Activated naive CD4-positive, alpha-beta T cell treated with anti-CD3 and anti-CD28 coated beads for 36 hours (primary cell): ENCODE measurements at regions of chr1 and their contacts with region 1.

Region 1: DNA sequence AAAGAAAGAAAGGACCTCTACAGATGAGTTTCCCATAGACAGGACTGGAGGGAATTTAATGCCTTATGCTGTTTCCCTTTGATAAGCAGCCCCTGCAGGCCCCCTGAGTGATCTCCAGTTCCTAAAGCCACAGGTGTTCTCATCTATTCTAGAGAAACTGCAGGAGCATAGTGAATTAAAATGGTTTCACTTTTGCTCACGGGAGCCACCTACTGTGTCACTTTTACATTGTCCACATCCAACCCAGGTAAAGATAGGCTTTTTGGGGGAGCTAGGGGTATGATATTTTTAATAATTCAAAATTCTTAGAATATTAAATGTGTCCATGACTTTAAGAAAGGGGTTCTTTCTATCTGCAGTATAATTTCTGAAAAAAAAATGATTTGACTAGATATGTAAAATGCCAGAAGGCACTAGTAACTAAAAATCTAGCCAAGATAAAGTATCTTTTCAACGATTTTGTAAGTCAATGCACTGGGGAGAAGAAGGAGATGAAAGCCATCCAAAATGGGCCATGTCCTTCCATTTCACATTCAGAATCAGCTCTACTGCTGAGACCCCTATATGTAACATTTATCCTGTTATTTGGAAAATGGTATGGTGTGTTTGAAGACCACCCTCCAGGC is 267.3 kb upstream of the DUSP10 start:
- DNase-seq: peak; percentile 47
- H3K4me3 Mint-ChIP-seq: no peak overlapping the region
- H3K27ac Mint-ChIP-seq: no peak overlapping the region
- H3K4me1 Mint-ChIP-seq: no peaks in the 10 kb centered on the region
- H3K27me3 Mint-ChIP-seq: no peaks in the 10 kb centered on the region

Region 2: DNA sequence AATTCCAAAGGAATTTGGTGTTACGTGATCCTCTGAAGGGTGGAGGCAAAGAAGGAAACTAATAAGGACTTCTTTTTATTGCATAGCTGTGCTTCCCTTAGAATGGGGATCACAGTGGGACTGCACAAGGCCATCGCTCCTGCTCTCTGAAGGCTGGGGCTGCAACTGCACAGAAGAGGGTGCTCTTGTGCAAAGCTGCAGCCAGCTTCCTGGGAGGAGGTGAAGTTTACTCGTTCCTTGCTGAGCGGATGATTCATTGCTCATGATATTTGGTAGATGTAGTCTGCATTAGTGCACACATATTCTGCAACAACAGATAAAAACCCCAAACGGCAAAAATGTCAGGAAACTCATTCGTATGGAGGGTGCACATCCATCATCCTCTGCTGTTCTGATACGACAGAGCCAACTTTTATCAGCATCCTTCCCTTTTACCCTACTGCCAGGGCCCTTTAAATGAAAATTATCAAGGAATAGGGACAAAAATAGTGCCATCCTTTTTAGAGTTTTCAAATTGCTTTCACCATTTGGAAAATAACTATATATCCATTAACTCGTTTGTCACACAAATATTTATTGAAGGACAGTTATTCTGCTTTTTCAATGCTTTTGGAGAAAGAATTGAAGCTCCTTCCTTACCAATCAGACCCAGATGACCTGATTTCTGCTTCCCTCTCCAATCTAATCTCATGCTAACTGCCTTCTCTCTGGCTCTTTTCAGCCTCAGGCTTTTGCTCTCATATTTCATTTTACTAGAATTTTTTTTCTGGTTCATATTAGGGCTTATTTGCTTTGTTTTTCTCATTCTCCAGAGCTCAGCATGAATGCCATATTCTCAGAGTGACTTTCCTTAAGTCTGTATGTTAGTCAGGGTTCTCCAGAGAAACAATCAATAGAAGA is 530.9 kb before region 1 on chr1:
- CTCF ChIA-PET with region 1: interaction called, 3 read pairs
- intact Hi-C with region 1: loop called (anchors 2 kb)
- DNase-seq: peak; percentile 74
- H3K4me3 Mint-ChIP-seq: no peak overlapping the region
- H3K27ac Mint-ChIP-seq: no peak overlapping the region
- H3K4me1 Mint-ChIP-seq: peaks cover 2% of the 10 kb centered on the region
- H3K27me3 Mint-ChIP-seq: peaks cover 5% of the 10 kb centered on the region

Region 3: DNA sequence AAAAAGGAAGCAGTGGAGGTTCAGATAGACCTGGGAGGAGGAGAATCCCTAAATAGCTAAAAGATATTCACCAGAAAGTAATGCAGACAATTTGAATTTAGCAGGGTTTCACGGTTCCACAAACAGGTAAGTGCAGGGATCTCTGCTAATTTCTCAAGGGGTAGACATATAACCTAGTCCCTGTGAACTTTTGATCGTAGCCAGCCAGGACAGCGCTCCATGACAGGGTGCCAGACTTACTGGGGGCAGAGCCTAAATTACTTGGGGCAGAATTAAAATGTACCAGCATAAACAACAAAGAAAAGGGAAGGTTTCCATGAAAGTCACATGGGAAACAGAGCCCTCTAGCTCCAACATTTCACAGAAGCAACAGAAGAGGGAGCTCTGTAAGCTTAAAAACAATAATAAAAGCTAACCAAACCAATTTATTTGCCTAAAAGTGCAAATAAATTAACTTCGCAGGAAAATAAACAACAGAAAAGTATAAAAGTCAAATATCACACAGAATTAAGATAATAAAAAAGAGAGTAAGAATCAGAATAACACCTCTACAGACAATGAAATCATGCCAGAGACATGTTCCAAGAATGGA is 465.6 kb before region 1 on chr1:
- CTCF ChIA-PET with region 1: interaction called, 3 read pairs
- intact Hi-C with region 1: loop called (anchors 1 kb)
- DNase-seq: no peak
- H3K4me3 Mint-ChIP-seq: no peak overlapping the region
- H3K27ac Mint-ChIP-seq: no peak overlapping the region
- H3K4me1 Mint-ChIP-seq: no peaks in the 10 kb centered on the region
- H3K27me3 Mint-ChIP-seq: peaks cover 8% of the 10 kb centered on the region

Region 4: DNA sequence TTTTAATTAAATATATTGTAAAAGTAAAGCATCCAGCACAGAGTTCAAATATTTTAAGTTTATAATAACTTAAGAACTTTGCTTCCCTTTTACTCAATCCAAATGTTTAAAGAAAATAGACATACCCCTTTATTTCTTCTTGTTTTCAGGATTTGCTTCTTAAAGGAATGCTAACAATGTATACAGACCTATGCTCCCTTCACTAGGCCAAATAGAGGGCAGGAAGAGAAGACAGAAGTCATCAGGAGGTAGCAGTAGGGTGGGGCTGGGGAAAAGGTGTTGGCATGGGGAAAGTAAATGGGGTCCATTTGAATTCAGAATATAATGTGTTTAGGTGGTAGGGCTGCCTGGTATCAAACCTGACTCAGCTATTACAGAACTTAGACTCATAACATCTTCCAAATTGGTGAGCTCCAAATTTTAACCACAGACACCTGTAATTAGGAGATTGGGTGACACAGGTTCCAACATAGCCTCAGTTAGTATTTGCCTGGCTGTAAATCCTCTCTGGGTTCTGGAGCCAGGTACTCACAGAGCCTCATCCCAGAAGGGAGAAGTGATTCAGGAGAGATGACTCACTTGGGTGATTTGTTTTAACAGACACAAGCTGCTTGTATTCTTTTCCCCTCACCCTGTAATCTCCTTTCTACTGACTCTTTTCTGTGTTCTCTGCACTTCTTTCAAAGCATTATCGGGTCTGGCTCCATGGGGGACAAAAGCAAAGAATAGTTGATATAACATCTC is 207.3 kb before region 1 on chr1:
- CTCF ChIA-PET with region 1: no interaction called
- intact Hi-C with region 1: loop called (anchors 1 kb)
- DNase-seq: peak; percentile 34
- H3K4me3 Mint-ChIP-seq: no peak overlapping the region
- H3K27ac Mint-ChIP-seq: no peak overlapping the region
- H3K4me1 Mint-ChIP-seq: peaks cover 28% of the 10 kb centered on the region
- H3K27me3 Mint-ChIP-seq: no peaks in the 10 kb centered on the region

Region 5: GRCh38 chr1:221858818-221859611 is 150.2 kb before region 1 on chr1:
- CTCF ChIA-PET with region 1: no interaction called
- intact Hi-C with region 1: loop called (anchors 5 kb)
- DNase-seq: no peak
- H3K4me3 Mint-ChIP-seq: no peak overlapping the region
- H3K27ac Mint-ChIP-seq: no peak overlapping the region
- H3K4me1 Mint-ChIP-seq: peaks cover 11% of the 10 kb centered on the region
- H3K27me3 Mint-ChIP-seq: no peaks in the 10 kb centered on the region

Region 6: DNA sequence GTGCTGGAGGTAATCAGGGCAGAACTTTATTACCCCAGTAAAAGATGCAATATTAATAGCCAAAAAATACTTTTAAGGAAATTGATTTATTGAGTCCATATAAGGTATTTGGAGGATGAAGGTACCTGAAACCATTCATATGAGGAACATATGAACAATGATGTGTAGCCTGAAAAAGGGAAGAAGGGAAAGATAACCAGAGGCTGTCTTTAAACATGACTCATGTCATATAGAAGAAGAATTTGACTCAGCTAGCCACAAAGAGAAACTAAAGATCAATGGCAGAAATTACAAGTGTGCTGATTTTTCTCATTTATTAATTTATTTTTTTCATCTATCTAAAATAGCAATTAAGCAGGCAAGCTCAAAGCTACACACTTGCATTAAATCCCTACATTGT is 131.1 kb before region 1 on chr1:
- CTCF ChIA-PET with region 1: no interaction called
- intact Hi-C with region 1: loop called (anchors 5 kb)
- DNase-seq: no peak
- H3K4me3 Mint-ChIP-seq: no peak overlapping the region
- H3K27ac Mint-ChIP-seq: no peak overlapping the region
- H3K4me1 Mint-ChIP-seq: peaks cover 9% of the 10 kb centered on the region
- H3K27me3 Mint-ChIP-seq: peaks cover 11% of the 10 kb centered on the region